HEK293T (cell line): ENCODE measurements at regions of chr14 and their contacts with region 1.

Region 1: DNA sequence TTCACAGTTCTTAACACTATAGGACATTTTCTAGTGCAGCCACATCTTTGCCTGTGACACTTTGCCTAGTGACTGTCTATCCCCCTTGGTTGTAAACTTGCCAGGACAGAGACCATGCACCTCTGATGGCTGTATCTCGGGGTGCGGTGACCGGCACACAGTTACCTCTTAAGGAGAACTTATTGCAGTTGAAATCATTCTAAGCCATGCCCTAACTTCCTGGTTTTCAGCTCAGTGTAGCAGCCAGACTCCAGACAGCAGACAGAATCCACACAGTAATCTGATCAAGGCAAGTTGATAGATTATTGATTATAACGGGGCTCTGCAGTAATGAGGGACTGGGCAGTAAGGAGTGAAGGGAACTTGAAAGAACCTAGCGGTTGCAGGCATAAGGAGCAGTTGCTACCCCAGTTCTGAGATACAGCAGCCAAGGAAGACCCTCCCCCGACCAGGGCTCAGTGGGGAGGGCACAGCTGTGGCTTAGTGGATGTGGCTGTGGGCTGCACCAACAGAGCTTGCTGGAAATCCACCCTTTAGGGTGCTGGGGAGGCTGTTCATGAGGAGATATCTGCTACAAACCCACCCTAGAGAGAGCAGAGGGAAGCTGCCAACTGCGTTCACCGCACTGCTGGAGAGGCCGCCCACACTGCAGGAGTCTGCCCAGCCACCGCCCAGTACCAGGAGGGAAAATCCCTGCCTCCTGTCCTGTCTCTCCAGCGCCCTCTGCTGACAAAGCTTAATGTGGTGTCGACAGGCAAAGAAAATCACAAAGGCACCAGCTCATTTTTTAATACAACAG is 58.2 kb upstream of the BEGAIN start:
- DNase-seq: peak; percentile 88

Region 2: GRCh38 chr14:100440187-100440631 is 205.2 kb before region 1 on chr14:
- CTCF ChIA-PET with region 1: interaction called, 39 read pairs
- POLR2A ChIA-PET with region 1: interaction called, 7 read pairs
- DNase-seq: peak; percentile 68

Region 3: GRCh38 chr14:100524933-100525243 is 120.5 kb before region 1 on chr14:
- CTCF ChIA-PET with region 1: interaction called, 12 read pairs
- POLR2A ChIA-PET with region 1: interaction called, 3 read pairs
- DNase-seq: no peak